Mammary epithelial cell (primary cell): ENCODE measurements at regions of chr9 and their contacts with region 1.

Region 1: GRCh38 chr9:20941174-20941690 is 90.2 kb downstream of the HACD4 start:
- DNase-seq: peak; percentile 66
- H3K4me3 ChIP-seq: no peak overlapping the region
- H3K27ac ChIP-seq: no peak overlapping the region
- H3K4me1 ChIP-seq: no peaks in the 10 kb centered on the region
- H3K27me3 ChIP-seq: no peaks in the 10 kb centered on the region
- CTCF ChIP-seq: peak; percentile 79 to 81

Region 2: DNA sequence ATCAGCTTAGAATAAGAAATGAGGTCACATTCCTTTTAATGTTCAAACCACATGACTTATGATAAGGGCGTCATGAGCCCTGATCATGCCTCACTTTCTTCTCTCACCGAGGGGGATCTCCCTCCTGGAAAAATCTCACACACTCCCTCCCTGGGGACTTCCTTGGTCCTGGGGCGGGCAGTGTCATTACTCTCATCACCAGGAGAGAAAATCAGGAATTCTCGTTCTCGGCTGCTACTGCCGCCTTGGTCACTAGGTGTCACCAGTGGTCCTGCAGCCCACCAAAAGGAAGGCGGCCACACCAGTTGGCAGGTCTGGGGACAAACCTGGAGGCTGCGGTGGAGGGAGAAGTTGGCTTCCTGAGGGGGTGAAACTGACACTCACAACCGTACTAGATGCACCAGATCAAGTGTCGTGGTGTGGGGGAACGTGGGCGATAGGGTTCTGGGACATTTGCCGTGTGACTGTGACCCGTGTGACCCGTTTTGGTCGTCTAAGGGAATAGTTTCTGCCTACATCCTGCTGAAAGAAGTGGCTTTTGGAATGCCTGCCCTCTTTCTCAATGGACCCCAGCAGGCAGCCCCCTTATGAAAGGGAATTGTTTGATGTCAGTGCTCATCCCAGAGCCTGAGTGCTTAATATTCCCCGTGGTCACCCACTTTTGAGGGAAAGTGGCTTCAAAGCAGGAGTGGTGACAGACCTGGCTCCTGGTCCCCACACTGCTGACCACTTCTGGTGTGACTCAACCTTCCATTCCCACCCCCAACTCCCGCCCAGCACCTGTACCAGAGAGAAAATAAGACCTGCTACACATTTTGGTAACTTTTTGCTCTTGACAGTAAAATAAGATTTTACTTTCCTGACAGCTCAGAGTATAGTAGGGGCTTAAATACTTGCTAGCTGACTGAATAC is 1469.2 kb before region 1 on chr9:
- CTCF ChIA-PET with region 1: no interaction called
- dilution Hi-C with region 1: no loop called
- in situ Hi-C with region 1: no loop called
- intact Hi-C with region 1: loop called (anchors 10 kb)
- DNase-seq: peak; percentile 48
- H3K4me3 ChIP-seq: no peak overlapping the region
- H3K27ac ChIP-seq: no peak overlapping the region
- H3K4me1 ChIP-seq: no peaks in the 10 kb centered on the region
- H3K27me3 ChIP-seq: no peaks in the 10 kb centered on the region
- CTCF ChIP-seq: peak; percentile 56 to 78

Region 3: DNA sequence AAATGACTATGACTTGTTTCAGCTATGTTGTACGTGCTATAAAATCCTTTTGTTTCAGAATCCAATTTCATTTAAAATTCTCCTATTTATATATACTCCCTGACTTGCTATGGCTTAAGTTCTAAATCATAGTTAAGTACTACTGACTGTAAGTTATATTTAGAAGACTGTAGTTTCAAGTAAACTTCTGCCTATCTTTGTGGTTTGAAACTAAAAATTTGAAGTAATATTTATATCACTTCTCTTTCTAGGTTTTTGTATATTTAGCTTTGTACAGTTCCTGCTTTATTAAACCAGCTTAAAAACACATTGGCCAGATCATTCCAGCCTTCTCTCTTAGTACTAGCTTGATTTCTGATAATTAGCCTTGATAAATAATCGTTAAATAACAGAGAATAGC is 515.2 kb before region 1 on chr9:
- CTCF ChIA-PET with region 1: no interaction called
- dilution Hi-C with region 1: no loop called
- in situ Hi-C with region 1: no loop called
- intact Hi-C with region 1: loop called (anchors 1 kb)
- DNase-seq: no peak
- H3K4me3 ChIP-seq: no peak overlapping the region
- H3K27ac ChIP-seq: no peak overlapping the region
- H3K4me1 ChIP-seq: no peaks in the 10 kb centered on the region
- H3K27me3 ChIP-seq: no peaks in the 10 kb centered on the region
- CTCF ChIP-seq: no peak

Region 4: DNA sequence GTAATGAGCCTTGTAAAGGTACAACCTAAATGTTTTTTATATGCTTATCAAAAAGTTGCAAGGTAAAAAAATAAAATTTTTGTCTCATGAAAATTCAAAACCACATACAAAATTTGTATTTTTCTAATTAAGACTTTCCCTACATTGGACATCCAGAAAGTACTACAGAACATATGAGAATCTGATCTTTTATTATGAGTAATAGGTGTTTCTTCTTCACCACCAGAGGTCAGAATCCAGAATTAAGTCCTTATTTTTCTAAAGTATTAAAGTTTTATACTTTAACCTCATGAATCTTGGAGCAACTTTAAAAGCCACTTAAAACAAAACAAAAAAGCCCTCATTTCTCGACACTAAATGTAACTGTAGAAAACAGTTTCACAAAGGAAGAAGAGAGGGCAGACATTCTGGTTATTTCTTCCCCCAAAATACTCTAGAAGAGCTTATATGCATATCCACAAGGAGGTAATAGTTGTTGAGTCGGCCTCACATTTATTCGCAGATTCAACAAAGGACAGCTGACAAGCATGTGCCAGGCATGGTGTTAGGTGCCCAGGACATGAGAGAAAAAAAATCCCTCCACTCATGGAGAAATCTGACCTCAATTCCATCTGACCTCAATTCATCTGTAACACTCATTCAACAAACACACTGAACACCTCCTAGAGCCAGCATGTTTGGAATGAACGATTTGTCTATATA is 388.2 kb before region 1 on chr9:
- CTCF ChIA-PET with region 1: no interaction called
- dilution Hi-C with region 1: no loop called
- in situ Hi-C with region 1: no loop called
- intact Hi-C with region 1: loop called (anchors 5 kb)
- DNase-seq: no peak
- H3K4me3 ChIP-seq: no peak overlapping the region
- H3K27ac ChIP-seq: no peak overlapping the region
- H3K4me1 ChIP-seq: peaks cover 15% of the 10 kb centered on the region
- H3K27me3 ChIP-seq: no peaks in the 10 kb centered on the region
- CTCF ChIP-seq: peak in 1 of 2 donors; percentile 23

Region 5: GRCh38 chr9:20753761-20754160 is 187.5 kb before region 1 on chr9:
- CTCF ChIA-PET with region 1: no interaction called
- dilution Hi-C with region 1: no loop called
- in situ Hi-C with region 1: no loop called
- intact Hi-C with region 1: no loop called
- DNase-seq: peak; percentile 71
- H3K4me3 ChIP-seq: no peak overlapping the region
- H3K27ac ChIP-seq: no peak overlapping the region
- H3K4me1 ChIP-seq: peaks cover 26% of the 10 kb centered on the region
- H3K27me3 ChIP-seq: no peaks in the 10 kb centered on the region
- CTCF ChIP-seq: no peak

Region 6: GRCh38 chr9:20884985-20885593 is 56.1 kb before region 1 on chr9:
- CTCF ChIA-PET with region 1: interaction called, 7 read pairs
- dilution Hi-C with region 1: no loop called
- in situ Hi-C with region 1: no loop called
- intact Hi-C with region 1: loop called (anchors 1 kb)
- DNase-seq: peak; percentile 37
- H3K4me3 ChIP-seq: no peak overlapping the region
- H3K27ac ChIP-seq: no peak overlapping the region
- H3K4me1 ChIP-seq: no peaks in the 10 kb centered on the region
- H3K27me3 ChIP-seq: no peaks in the 10 kb centered on the region
- CTCF ChIP-seq: peak; percentile 57 to 73